ENCODE measurements at regions of chr22 and their contacts with region 1.

Region 1: GRCh38 chr22:37990301-37990700 is 5.9 kb upstream of the SOX10 start:
- DNase-seq: no peak
- H3K4me3 ChIP-seq: no peak overlapping the region
- H3K27ac ChIP-seq: no peak overlapping the region
- H3K27me3 ChIP-seq: peaks cover 2% of the 10 kb centered on the region
- CTCF ChIP-seq: no peak

Region 2: GRCh38 chr22:37933711-37934376 is 56.5 kb before region 1 on chr22:
- CTCF ChIA-PET with region 1: no interaction called
- POLR2A ChIA-PET with region 1: interaction called, 10 read pairs
- DNase-seq: peak; percentile 55
- H3K4me3 ChIP-seq: no peak overlapping the region
- H3K27ac ChIP-seq: peak overlapping the region; percentile 57
- H3K27me3 ChIP-seq: no peaks in the 10 kb centered on the region
- CTCF ChIP-seq: peak; percentile 98

Region 3: DNA sequence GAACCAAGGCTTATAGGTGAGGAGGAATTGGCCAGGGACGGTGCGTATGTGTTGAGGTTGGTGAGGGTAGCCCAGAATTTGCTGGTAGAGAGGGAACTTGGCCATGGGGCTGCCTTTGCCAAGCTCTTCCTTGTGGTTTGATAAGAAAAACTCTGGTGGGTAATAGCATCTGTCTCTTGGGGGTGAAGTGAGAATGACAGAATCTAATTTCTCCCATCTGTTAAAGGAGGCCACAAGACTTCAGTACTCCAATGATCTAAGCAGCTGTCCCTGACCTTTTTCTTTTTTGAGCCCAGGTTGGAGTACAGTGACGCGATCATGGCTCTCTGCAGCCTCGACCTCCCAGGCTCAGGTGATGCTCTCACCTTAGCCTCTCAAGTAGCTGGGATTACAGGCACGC is 30.9 kb after region 1 on chr22:
- CTCF ChIA-PET with region 1: no interaction called
- POLR2A ChIA-PET with region 1: no interaction called
- DNase-seq: no peak
- H3K4me3 ChIP-seq: no peak overlapping the region
- H3K27ac ChIP-seq: no peak overlapping the region
- H3K27me3 ChIP-seq: peaks cover 18% of the 10 kb centered on the region
- CTCF ChIP-seq: no peak